Right ventricle myocardium superior (tissue), 1 donor: ENCODE measurements at regions of chr9 and their contacts with region 1.

Region 1: GRCh38 chr9:128921881-128922763 is 1.3 kb downstream of the PHYHD1 start:
- DNase-seq: peak; percentile 74
- ATAC-seq: peak; percentile 73

Region 2: DNA sequence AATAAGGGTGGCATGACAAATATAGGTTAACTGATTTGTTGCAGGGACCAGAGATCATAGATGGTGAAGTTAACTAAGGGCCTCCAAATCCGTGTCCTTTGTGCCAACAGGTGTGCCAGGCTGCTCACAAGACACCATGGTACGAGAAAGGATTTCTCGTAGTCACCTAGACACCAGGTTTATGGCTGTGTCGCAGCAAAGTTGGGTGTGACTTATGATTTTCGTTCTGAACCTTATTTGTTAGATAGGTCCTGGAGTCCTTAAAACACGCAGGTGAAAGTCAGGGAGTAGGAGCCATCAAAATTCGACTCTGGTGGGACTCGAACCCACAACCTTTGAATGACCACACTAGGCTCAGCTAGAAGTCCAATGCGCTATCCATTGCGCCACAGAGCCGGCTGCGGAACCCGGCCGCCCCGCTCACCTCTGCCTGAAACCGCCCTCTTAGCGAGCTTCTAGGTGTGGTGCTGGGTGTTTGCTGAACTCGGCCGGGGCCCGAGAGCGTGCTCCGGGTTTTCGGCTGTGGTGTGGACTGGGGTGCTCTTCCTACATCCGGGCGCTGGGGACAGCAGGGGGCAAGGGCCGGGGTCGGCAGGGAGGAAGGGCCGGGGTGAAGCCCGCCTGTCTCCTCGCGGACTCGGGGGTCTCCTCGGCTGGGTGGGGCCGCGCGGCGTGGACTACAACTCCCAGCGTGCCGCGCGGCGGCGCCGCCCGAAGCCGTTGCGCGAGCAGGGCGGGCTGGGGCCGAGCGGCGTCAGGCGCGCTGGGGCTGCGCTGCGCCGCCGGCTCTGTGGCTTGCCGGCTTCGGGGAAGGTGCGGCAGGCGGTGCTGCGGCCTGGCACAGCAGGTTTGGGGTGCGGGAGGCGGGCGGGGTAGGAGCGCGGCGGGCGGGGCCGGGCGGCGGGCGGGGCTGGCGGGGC is 582.1 kb before region 1 on chr9 and contains the start of gene SLC27A4:
- intact Hi-C with region 1: no loop called
- DNase-seq: peak; percentile 84
- ATAC-seq: peak; percentile 95
- total RNA-seq, gene SLC27A4: 19.0 TPM

Region 3: GRCh38 chr9:128771745-128772519 is 150.2 kb before region 1 on chr9 and contains the start of gene ZER1:
- intact Hi-C with region 1: no loop called
- DNase-seq: peak; percentile 97
- ATAC-seq: peak; percentile 99
- total RNA-seq, gene ZER1: 57.3 TPM

Region 4: GRCh38 chr9:128881901-128882681 is 40.0 kb before region 1 on chr9 and contains the starts of genes KYAT1 and LRRC8A:
- intact Hi-C with region 1: loop called (anchors 5 kb)
- DNase-seq: peak; percentile 99
- ATAC-seq: peak; percentile 91
- total RNA-seq, gene KYAT1: 12.6 TPM
- total RNA-seq, gene LRRC8A: 20.2 TPM

Region 5: DNA sequence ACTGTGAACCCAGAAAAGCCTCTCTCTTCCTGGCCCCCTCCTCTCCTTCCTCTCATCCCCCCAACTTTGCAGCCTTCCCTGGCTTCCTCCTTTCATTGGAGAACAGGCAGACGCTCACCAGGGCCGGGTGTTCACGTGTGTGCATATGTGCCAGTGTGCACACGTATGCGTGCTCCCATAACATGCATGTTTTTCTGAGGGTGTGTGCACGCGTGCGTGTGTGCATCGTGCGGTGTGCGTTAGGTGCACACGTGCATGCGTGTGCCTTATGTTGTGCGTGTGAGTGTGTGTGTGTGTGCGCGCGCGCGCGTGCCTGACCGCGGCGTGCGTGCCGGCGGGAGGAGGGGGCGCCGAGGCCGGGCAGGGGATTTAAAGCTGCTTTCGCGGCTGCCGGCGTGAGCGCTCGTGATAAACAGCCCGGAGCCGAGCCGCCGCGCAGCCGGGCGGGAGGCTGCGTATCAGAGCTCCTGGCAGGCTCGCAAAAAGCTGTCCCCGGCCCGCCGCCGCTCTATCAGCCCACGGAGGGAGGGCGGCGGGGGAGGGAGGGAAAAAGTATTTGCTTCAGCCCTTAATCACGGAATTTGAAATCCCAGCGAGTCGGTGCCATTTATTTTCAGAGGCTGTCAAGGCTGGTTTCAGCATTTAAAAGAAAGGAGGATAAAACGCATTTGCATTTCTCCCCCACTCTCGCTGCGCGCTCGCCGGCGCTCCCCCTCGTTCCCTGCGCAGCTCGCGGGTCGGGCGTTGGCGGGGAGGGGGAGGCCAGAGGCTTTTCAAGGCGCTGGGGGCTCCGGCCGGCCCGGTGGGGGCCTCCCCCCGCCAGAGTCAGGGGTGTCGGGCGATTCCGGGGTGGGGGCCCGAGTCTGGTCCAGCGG is 514.9 kb after region 1 on chr9:
- intact Hi-C with region 1: no loop called
- DNase-seq: peak; percentile 82
- ATAC-seq: peak; percentile 89